WTC11 (cell line): ENCODE measurements at regions of chr20 and their contacts with region 1.

Region 1: GRCh38 chr20:48295445-48295963 is 510.2 kb upstream of the SULF2 start:
- DNase-seq: no peak
- ATAC-seq: peak; percentile 79
- H3K4me3 Mint-ChIP-seq: no peak overlapping the region
- H3K27ac Mint-ChIP-seq: peak overlapping the region; percentile 89
- H3K4me1 Mint-ChIP-seq: peaks cover 56% of the 10 kb centered on the region
- H3K27me3 Mint-ChIP-seq: no peaks in the 10 kb centered on the region
- CTCF ChIP-seq: no peak

Region 2: GRCh38 chr20:47785854-47786764 is 509.4 kb before region 1 on chr20:
- CTCF ChIA-PET with region 1: interaction called, 28 read pairs
- POLR2A ChIA-PET with region 1: no interaction called
- DNase-seq: peak; percentile 63
- ATAC-seq: peak; percentile 50
- H3K4me3 Mint-ChIP-seq: peak overlapping the region; percentile 83
- H3K27ac Mint-ChIP-seq: no peak overlapping the region; the same call in 1 of the 2 replicates
- H3K4me1 Mint-ChIP-seq: peaks cover 42% of the 10 kb centered on the region
- H3K27me3 Mint-ChIP-seq: peaks cover 38% of the 10 kb centered on the region
- CTCF ChIP-seq: peak; percentile 35; the same call in 1 of the 2 replicates

Region 3: GRCh38 chr20:47854163-47854562 is 441.3 kb before region 1 on chr20:
- CTCF ChIA-PET with region 1: interaction called, 11 read pairs
- POLR2A ChIA-PET with region 1: no interaction called
- DNase-seq: no peak
- ATAC-seq: no peak
- H3K4me3 Mint-ChIP-seq: no peak overlapping the region
- H3K27ac Mint-ChIP-seq: no peak overlapping the region
- H3K4me1 Mint-ChIP-seq: peaks cover 10% of the 10 kb centered on the region
- H3K27me3 Mint-ChIP-seq: peaks cover 2% of the 10 kb centered on the region; the same call in 1 of the 2 replicates
- CTCF ChIP-seq: no peak